Naive thymus-derived CD4-positive, alpha-beta T cell (primary cell): ENCODE measurements at regions of chrX and their contacts with region 1.

Region 1: DNA sequence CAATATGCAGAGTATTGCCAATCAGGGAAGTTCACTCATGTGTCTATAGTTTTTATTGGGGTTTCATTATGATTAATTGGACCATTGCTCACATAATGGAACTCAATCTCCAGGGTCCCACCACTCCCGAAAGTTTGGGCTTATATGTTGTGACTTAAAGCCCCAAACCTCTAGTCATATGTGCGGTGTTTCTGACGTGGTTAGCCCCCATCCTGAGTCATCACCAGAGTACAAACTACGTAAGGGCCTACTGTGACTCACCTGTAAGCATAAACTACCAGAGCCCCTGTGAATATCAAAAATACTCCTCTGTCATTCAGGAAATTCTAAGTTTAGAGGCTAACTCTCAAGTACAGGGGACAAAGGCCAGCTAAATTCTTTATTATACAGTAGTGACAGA is 5.4 kb downstream of the YIPF6 start:
- DNase-seq: peak in 1 of 9 donors; percentile 32
- ATAC-seq: peak; percentile 67
- H3K4me3 ChIP-seq: no peak overlapping the region
- H3K4me3 Mint-ChIP-seq: peak overlapping the region in 2 of 10 donors; percentile 3 to 25
- H3K27ac ChIP-seq: no peak overlapping the region
- H3K27ac Mint-ChIP-seq: peak overlapping the region in 6 of 9 donors; percentile 9 to 80 (median 52)
- H3K4me1 ChIP-seq: peaks cover 0 to 5% of the 10 kb centered on the region in 2 donors
- H3K4me1 Mint-ChIP-seq: peaks cover 20 to 87% (median 70%) of the 10 kb centered on the region in 7 donors
- H3K27me3 ChIP-seq: no peaks in the 10 kb centered on the region
- H3K27me3 Mint-ChIP-seq: no peaks in the 10 kb centered on the region

Region 2: GRCh38 chrX:69165087-69165651 is 660.9 kb after region 1 on chrX and contains the start of gene PJA1:
- CTCF ChIA-PET with region 1: no interaction called
- POLR2A ChIA-PET with region 1: no interaction called
- intact Hi-C with region 1: loop called (anchors 2 to 10 kb)
- DNase-seq: peak; percentile 41 to 74 (median 70)
- ATAC-seq: peak; percentile 86
- H3K4me3 ChIP-seq: peak within 1 kb of the TSS; percentile 68
- H3K4me3 Mint-ChIP-seq: peak within 1 kb of the TSS; percentile 69 to 90 (median 85)
- H3K27ac ChIP-seq: peak within 1 kb of the TSS; percentile 81
- H3K27ac Mint-ChIP-seq: peak within 1 kb of the TSS; percentile 80 to 94 (median 92)
- H3K4me1 ChIP-seq: peaks cover 13 to 15% of the 10 kb centered on the region in 2 donors
- H3K4me1 Mint-ChIP-seq: peaks cover 20 to 37% (median 29%) of the 10 kb centered on the region in 7 donors
- H3K27me3 ChIP-seq: no peaks in the 10 kb centered on the region
- H3K27me3 Mint-ChIP-seq: peaks cover 0 to 12% (median 0%) of the 10 kb centered on the region in 5 donors
- total RNA-seq, gene PJA1: 14.4 to 27.0 (median 22.5) TPM